ENCODE measurements at regions of chrX and their contacts with region 1.

Region 1: DNA sequence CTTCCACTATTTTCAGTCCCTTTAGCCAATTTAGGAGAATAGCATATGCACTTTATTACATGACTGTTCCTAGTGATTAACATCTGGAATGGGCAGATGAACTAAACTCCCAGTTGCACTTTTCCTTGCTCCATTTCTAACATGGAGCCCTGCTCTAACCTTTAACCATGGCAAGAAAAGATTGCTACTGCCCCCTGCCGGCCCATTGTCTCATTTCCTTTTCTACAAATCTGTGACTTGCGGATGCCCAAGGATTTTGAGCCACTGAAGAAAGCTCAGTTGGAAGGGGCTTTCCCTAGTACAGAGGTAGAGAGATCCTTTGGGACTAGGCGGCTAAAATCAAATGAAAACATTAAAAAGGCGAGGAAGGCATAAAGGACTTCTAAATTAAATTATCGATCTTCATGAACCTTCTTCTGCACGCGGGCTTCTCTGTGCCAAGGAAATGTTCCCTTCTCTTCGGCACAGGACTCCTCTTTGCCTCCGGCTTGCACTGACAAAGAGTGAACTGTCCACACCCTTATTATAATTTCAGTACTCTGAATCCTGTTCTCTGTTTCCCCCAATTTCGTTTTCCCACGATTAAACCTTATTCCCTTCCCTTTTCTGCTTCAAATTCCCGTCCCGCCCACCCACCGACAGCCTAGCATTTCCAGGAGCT is 577 bp upstream of the GLRA2 start:
- DNase-seq: peak; percentile 10 to 42 (median 20)
- ATAC-seq: peak; percentile 54; the same call in 1 of the 3 replicates
- H3K4me3 ChIP-seq: no peak overlapping the region
- H3K27ac ChIP-seq: no peak overlapping the region
- H3K4me1 ChIP-seq: no peaks in the 10 kb centered on the region
- H3K27me3 ChIP-seq: no peaks in the 10 kb centered on the region
- CTCF ChIP-seq: peak; percentile 29 to 44 (median 41); a peak in 5 of 6 replicates
- EP300 ChIP-seq: no peak
- POLR2A ChIP-seq: no peak
- RAD21 ChIP-seq: peak; percentile 47 to 63

Region 2: DNA sequence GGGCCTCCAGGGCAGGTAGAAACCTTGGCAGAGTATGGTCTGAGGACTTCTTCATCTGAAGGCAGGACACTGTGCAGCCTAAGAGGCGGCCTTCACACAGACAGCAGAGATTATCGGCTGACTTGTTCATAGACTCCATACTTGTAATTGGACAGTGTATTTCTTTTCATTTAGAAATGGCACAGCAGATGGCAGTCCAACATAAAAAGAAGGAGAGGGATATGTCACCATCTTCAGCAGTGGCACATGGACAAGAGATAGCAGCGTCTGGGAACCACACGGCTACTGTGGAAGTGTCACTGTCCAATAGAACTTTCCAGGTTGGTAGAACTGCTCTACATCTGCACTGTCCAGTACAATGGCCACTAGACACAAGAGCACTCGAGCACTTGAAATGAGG is 477.3 kb before region 1 on chrX:
- CTCF ChIA-PET with region 1: no interaction called
- POLR2A ChIA-PET with region 1: no interaction called
- in situ Hi-C with region 1: no loop called
- intact Hi-C with region 1: loop called (anchors 5 kb)
- DNase-seq: no peak
- ATAC-seq: peak; percentile 65
- H3K4me3 ChIP-seq: no peak overlapping the region
- H3K27ac ChIP-seq: no peak overlapping the region
- H3K4me1 ChIP-seq: no peaks in the 10 kb centered on the region
- H3K27me3 ChIP-seq: no peaks in the 10 kb centered on the region; a peak in 1 of 5 replicates
- CTCF ChIP-seq: peak in 2 of 3 experiments; percentile 15 to 48; a peak in 2 of 6 replicates
- EP300 ChIP-seq: no peak
- POLR2A ChIP-seq: no peak
- RAD21 ChIP-seq: peak; percentile 49 to 66; a peak in 3 of 4 replicates

Region 3: DNA sequence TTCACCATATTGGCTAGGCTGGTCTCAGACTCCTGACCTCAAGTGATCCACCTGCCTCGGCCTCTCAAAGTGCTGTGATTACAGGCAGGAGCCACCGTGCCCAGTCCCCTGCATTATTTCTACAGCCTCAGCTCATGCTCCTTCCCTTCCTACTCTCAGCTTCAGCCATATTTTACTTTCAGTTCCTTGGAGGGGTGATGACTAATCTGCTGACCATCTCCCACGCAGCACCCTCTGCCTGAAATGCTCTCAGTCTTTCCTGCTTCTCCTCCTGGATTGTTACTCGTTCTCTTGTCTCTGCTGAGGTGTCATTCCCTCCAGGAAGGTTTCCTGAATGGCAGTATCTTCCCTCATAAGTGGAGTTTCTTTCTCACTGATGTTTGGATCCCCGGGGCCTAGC is 407.8 kb after region 1 on chrX:
- CTCF ChIA-PET with region 1: no interaction called
- POLR2A ChIA-PET with region 1: no interaction called
- in situ Hi-C with region 1: no loop called
- intact Hi-C with region 1: no loop called
- DNase-seq: peak; percentile 9 to 19 (median 12)
- ATAC-seq: peak; percentile 74
- H3K4me3 ChIP-seq: no peak overlapping the region
- H3K27ac ChIP-seq: no peak overlapping the region
- H3K4me1 ChIP-seq: no peaks in the 10 kb centered on the region
- H3K27me3 ChIP-seq: no peaks in the 10 kb centered on the region
- CTCF ChIP-seq: no peak
- EP300 ChIP-seq: no peak
- POLR2A ChIP-seq: no peak
- RAD21 ChIP-seq: no peak

Measured in K562 (cell line).